HEK293 (cell line): ENCODE measurements at regions of chr9 and their contacts with region 1.

Region 1: DNA sequence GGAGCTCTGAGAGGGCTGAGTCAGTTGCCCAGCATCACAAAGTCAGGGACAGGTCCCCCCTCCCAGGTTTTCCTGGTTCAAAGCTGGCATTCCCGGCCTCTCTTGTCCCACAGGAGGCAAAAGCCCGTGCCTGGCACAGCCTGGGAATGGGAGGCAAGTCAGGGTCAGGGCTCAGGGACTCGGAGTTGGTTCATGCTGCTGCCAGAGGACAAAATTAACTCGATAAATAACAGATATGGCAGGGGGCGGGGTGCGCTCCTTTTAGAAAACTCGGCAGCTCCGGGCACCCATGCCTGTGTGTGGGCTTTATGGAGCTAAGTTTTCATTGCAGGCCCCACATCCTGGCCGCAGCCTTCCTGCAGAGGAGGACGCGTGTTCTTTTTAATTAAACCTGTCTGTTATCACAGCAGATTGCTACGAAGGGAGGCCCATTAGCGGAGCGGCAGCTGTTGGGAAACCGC is 62.8 kb upstream of the LMX1B start:
- H3K4me3 ChIP-seq: no peak overlapping the region
- H3K27ac ChIP-seq: no peak overlapping the region
- H3K4me1 ChIP-seq: no peaks in the 10 kb centered on the region
- CTCF ChIP-seq: no peak

Region 2: GRCh38 chr9:126420643-126421577 is 130.0 kb before region 1 on chr9:
- CTCF ChIA-PET with region 1: no interaction called
- POLR2A ChIA-PET with region 1: no interaction called
- H3K4me3 ChIP-seq: no peak overlapping the region
- H3K27ac ChIP-seq: no peak overlapping the region
- H3K4me1 ChIP-seq: no peaks in the 10 kb centered on the region
- CTCF ChIP-seq: no peak

Region 3: GRCh38 chr9:126514047-126514821 is 36.7 kb before region 1 on chr9:
- CTCF ChIA-PET with region 1: interaction called, 62 read pairs
- POLR2A ChIA-PET with region 1: no interaction called
- H3K4me3 ChIP-seq: peak overlapping the region; percentile 5
- H3K27ac ChIP-seq: no peak overlapping the region
- H3K4me1 ChIP-seq: peaks cover 12% of the 10 kb centered on the region
- CTCF ChIP-seq: no peak